Heart right ventricle (tissue), 16 donors: ENCODE measurements at regions of chr1 and their contacts with region 1.

Region 1: GRCh38 chr1:11337580-11338073 is 64.6 kb downstream of the UBIAD1 start:
- DNase-seq: peak; percentile 21 to 33
- ATAC-seq: peak in 1 of 8 donors; percentile 53
- H3K4me3 ChIP-seq: no peak overlapping the region
- H3K27ac ChIP-seq: no peak overlapping the region
- H3K4me1 ChIP-seq: peaks cover 0 to 3% (median 0%) of the 10 kb centered on the region in 9 donors
- H3K27me3 ChIP-seq: peaks cover 4 to 79% (median 44%) of the 10 kb centered on the region in 7 donors
- CTCF ChIP-seq: peak; percentile 37 to 79 (median 74)

Region 2: GRCh38 chr1:11134251-11134897 is 203.3 kb before region 1 on chr1:
- intact Hi-C with region 1: no loop called
- DNase-seq: no peak
- ATAC-seq: peak in 4 of 8 donors; percentile 10 to 42 (median 33)
- H3K4me3 ChIP-seq: no peak overlapping the region
- H3K27ac ChIP-seq: peak overlapping the region in 4 of 10 donors; percentile 20 to 71 (median 53)
- H3K4me1 ChIP-seq: peaks cover 0 to 34% (median 8%) of the 10 kb centered on the region in 9 donors
- H3K27me3 ChIP-seq: no peaks in the 10 kb centered on the region
- CTCF ChIP-seq: no peak

Region 3: DNA sequence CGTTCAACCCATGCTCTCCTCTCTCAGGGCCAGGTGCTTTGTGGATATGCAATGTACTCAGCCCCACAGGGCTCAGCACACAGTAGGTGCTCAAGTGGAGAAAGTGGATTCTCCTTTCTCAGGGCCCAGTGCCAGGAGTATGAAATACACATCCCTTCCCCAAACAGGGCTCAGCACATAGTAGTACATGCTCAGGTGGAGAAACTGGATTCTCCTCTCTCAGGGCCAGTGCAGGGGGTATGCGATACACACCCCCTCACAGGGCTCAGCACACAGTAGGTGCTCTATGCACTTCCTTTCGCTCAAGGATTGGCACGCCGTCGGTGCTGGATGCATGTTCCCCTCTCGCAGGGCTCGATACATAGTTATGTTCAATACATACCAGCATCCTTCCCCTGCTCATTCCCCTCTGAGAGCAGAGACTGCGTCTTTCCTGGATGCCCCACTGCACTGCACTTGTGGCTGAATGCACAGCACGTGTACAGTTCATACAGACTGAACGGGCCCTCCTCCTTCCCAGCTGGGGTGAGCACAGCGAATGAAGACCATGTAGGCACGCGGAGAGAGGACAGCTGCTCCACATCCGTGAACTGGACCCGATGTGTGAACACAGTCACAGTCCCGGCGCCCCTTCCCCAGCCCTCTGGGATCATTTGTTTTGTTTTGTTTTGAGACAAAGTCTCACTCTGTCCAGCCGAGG is 124.7 kb after region 1 on chr1:
- intact Hi-C with region 1: loop called in 1 of 10 experiments (anchors 10 kb)
- DNase-seq: no peak
- ATAC-seq: no peak
- H3K4me3 ChIP-seq: no peak overlapping the region
- H3K27ac ChIP-seq: no peak overlapping the region
- H3K4me1 ChIP-seq: peaks cover 0 to 11% (median 0%) of the 10 kb centered on the region in 9 donors
- H3K27me3 ChIP-seq: peaks cover 0 to 83% (median 32%) of the 10 kb centered on the region in 7 donors
- CTCF ChIP-seq: no peak